ENCODE measurements at regions of chr16 and their contacts with region 1.

Region 1: GRCh38 chr16:57300387-57301125 is 16.1 kb upstream of the PLLP start:
- DNase-seq: peak; percentile 100
- H3K4me3 ChIP-seq: peak overlapping the region; percentile 26 to 37
- H3K27ac ChIP-seq: peak overlapping the region; percentile 86 to 87
- H3K4me1 ChIP-seq: no peaks in the 10 kb centered on the region
- H3K27me3 ChIP-seq: no peaks in the 10 kb centered on the region
- CTCF ChIP-seq: peak; percentile 84 to 100 (median 98)
- POLR2A ChIP-seq: peak; percentile 63

Region 2: DNA sequence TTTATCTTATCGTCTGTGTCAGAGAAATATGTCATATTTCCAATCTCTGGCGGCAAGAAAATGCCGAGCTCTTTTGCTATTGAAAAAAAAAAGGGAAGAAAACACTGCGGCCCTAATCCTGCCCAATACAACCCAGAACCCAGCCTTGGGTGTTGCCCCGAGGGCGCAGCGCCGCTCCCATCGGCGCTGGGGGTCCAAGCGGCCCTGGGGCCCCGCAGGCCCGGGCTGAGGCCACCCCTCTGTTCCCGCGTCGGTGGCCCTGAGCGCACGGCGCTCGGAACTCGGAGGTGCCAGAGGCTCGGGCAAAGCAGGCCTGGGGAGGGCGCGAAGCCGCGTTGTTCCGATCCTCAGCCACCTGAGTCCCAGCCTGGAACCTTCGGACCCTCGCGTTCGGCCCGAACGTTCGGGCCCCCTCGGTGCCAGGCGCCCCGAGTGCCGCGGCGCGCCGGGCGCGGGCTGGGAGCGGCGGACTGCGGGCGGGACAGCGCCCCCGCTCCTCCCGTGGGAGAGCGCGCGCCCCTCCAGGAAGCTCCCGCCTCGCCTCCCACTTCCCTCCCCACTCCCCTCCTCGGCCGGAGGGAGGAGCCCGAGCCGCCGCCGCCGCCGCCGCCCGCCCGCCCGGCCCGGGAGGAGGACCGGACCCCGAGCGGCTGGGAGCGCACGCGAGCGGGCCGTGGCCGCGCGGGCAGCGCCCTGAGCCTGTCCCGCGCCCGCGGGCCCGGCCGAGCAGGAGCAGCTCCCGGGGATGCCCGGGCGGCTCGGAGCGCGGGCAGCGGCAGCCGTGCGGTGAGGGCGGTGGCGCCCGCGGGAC is 208.4 kb before region 1 on chr16 and contains the start of gene CPNE2:
- intact Hi-C with region 1: loop called (anchors 10 kb)
- DNase-seq: peak; percentile 54
- H3K4me3 ChIP-seq: peak within 1 kb of the TSS; percentile 76 to 87
- H3K27ac ChIP-seq: peak within 1 kb of the TSS; percentile 73 to 75
- H3K4me1 ChIP-seq: peaks cover 6% of the 10 kb centered on the region
- H3K27me3 ChIP-seq: no peaks in the 10 kb centered on the region
- CTCF ChIP-seq: peak in 2 of 4 experiments; percentile 15 to 21
- POLR2A ChIP-seq: no peak
- total RNA-seq, gene CPNE2: 22.3 to 23.3 TPM

Region 3: GRCh38 chr16:57185944-57186871 is 114.3 kb before region 1 on chr16 and contains the starts of genes PSME3IP1 and RSPRY1:
- intact Hi-C with region 1: loop called (anchors 10 kb)
- DNase-seq: peak; percentile 99
- H3K4me3 ChIP-seq: peak within 1 kb of the TSS; percentile 71 to 76
- H3K27ac ChIP-seq: peak within 1 kb of the TSS; percentile 91 to 92
- H3K4me1 ChIP-seq: peaks cover 10% of the 10 kb centered on the region
- H3K27me3 ChIP-seq: no peaks in the 10 kb centered on the region
- CTCF ChIP-seq: no peak
- POLR2A ChIP-seq: peak; percentile 93
- total RNA-seq, gene PSME3IP1: 64.1 to 95.8 TPM
- total RNA-seq, gene RSPRY1: 35.8 to 45.3 TPM

Region 4: GRCh38 chr16:57244767-57245471 is 55.6 kb before region 1 on chr16 and contains the start of gene ARL2BP:
- intact Hi-C with region 1: loop called (anchors 5 kb)
- DNase-seq: peak; percentile 98
- H3K4me3 ChIP-seq: peak within 1 kb of the TSS; percentile 73
- H3K27ac ChIP-seq: peak within 1 kb of the TSS; percentile 82 to 90
- H3K4me1 ChIP-seq: no peaks in the 10 kb centered on the region
- H3K27me3 ChIP-seq: no peaks in the 10 kb centered on the region
- CTCF ChIP-seq: peak in 2 of 4 experiments; percentile 3 to 8
- POLR2A ChIP-seq: peak; percentile 89
- total RNA-seq, gene ARL2BP: 62.3 to 81.4 TPM

Region 5: DNA sequence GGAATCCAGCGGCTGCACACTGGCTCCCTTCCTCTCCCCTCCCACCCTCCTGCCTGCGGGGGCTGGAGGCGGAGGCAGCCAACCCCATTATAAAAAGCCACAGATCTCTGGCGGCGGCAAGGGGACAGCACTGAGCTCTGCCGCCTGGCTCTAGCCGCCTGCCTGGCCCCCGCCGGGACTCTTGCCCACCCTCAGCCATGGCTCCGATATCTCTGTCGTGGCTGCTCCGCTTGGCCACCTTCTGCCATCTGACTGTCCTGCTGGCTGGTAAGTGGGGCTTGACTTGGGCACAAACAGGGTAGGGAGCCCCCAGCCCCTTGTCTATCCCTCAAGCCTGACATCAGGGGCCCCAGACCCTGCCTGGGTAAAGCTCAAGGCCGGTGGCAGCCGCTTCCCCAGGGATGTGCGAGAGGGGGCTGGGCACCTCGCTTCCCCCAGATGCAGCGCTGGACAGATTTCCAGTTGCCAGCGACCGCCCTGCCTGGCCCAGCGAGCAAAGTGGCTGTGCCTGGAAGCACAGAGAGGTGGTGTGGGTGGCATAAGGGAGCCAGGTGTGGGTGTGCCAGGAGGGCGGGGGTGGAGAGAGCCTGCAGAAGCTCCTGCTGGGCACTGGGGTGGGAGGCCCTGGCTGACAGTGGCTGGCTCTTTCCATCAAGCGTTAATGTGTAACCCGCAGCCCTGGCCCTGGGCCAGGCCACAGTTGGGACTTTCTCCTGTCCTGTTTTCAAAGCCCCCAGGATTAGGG is 72.0 kb after region 1 on chr16 and contains the start of gene CX3CL1:
- intact Hi-C with region 1: loop called (anchors 1 kb)
- DNase-seq: peak; percentile 85
- H3K4me3 ChIP-seq: peak within 1 kb of the TSS; percentile 52 to 53
- H3K27ac ChIP-seq: peak within 1 kb of the TSS; percentile 90
- H3K4me1 ChIP-seq: peaks cover 7% of the 10 kb centered on the region
- H3K27me3 ChIP-seq: no peaks in the 10 kb centered on the region
- CTCF ChIP-seq: peak in 2 of 4 experiments; percentile 25 to 35
- POLR2A ChIP-seq: peak; percentile 98
- total RNA-seq, gene CX3CL1: 30.2 to 52.6 TPM

Region 6: DNA sequence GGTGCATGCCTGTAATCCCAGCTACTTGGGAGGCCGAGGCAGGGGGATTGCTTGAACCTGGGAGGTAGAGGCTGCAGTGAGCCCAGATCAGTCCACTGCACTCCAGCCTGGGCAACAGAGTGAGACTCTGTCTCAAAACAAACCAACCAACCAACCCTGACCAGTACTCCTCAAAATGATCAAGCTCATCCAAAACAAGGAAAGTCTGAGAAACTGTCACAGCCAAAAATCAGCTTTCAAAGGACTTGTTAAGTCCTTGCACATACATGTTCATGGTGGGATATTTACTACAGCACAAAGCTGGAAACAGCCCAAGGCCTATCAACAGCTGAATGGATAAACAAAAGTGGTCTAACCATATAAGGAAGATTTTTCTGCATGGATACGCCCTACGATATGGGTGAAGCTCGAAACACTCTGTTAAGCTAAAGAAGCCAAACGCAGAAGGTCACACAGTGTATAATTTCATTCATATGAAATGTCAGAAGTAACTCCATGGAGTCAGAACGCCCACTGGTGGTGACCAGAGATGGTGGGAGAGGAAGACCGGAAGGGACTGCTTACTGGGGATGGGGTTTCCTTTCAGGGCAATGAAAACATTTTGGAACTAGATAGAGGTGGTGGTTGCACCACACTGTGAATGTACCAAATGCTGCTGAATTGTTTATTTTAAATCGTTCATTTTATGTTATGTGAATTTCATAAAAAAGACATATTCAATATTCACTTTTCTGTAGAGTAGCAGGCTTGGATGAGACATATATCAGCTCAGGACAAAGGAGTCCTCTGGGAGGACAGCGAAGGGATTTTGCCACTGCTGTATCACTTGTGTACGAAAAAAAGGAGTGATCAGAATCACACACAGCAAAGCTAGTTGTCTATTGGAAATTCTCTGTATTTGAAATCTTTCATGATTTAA is 121.7 kb after region 1 on chr16:
- intact Hi-C with region 1: loop called (anchors 1 kb)
- DNase-seq: peak; percentile 51
- H3K4me3 ChIP-seq: no peak overlapping the region
- H3K27ac ChIP-seq: no peak overlapping the region
- H3K4me1 ChIP-seq: no peaks in the 10 kb centered on the region
- H3K27me3 ChIP-seq: no peaks in the 10 kb centered on the region
- CTCF ChIP-seq: peak in 3 of 4 experiments; percentile 68 to 79 (median 72)
- POLR2A ChIP-seq: no peak

Region 7: GRCh38 chr16:57535680-57536305 is 235.2 kb after region 1 on chr16:
- intact Hi-C with region 1: loop called (anchors 5 kb)
- DNase-seq: peak; percentile 96
- H3K4me3 ChIP-seq: peak overlapping the region; percentile 96 to 97
- H3K27ac ChIP-seq: peak overlapping the region; percentile 89 to 94
- H3K4me1 ChIP-seq: peaks cover 18% of the 10 kb centered on the region
- H3K27me3 ChIP-seq: no peaks in the 10 kb centered on the region
- CTCF ChIP-seq: peak in 2 of 4 experiments; percentile 28 to 30
- POLR2A ChIP-seq: peak; percentile 22